Activated CD4-positive, alpha-beta T cell treated with anti-CD3 and anti-CD28 coated beads for 36 hours (primary cell): ENCODE measurements at regions of chr19 and their contacts with region 1.

Region 1: DNA sequence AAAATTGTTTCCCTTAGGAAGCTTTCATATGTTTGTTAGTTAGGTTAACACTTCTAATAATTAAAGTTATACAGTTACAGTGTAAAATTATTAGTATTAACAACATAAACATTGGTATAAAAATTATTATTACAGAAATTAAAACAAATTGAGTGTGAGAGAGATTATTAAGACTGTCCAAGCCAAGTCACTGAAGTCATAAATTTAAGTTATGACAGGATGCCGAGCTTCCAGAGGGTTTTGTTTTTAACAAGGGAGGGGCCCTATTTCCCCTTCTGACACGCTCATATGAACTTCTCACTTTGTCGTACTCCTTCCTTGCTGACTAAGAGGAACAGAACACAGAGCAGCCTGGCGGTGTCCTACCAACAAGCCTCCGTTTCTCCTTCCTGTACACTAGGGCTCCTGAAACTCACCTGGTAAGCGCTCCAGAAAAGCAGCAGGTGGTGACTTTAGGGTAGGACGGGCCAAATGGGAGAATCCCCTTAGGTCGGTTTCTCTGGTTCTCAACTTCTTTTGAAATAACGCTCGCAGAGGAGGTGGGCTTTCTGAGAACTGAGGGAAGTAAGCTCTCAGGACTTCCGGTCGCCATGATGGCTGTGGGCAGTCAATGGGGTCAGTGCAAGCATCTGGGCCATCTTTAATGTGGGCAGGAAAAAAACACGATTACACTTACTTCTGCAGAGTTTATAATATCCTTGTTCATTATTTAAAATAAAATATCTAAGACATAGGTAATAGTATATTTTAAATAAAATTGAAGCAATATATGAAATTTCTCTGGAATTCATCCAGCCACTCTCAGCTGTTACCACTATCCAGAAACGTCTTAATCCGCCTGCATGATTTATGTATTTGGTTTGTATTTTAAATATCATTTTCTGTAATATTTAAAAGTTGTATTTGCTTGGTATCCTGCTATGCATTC is at the start of gene CARD8:
- DNase-seq: peak; percentile 89
- ATAC-seq: peak; percentile 89
- H3K4me3 Mint-ChIP-seq: peak within 1 kb of the TSS; percentile 92
- H3K27ac Mint-ChIP-seq: peak within 1 kb of the TSS; percentile 98
- H3K4me1 Mint-ChIP-seq: peaks cover 63% of the 10 kb centered on the region
- H3K27me3 Mint-ChIP-seq: no peaks in the 10 kb centered on the region
- total RNA-seq, gene CARD8: 109 to 118 TPM

Region 2: GRCh38 chr19:48059331-48059730 is 196.3 kb before region 1 on chr19:
- CTCF ChIA-PET with region 1: no interaction called
- POLR2A ChIA-PET with region 1: interaction called, 11 read pairs
- intact Hi-C with region 1: no loop called
- DNase-seq: peak; percentile 38
- ATAC-seq: no peak
- H3K4me3 Mint-ChIP-seq: no peak overlapping the region
- H3K27ac Mint-ChIP-seq: no peak overlapping the region
- H3K4me1 Mint-ChIP-seq: no peaks in the 10 kb centered on the region
- H3K27me3 Mint-ChIP-seq: no peaks in the 10 kb centered on the region

Region 3: DNA sequence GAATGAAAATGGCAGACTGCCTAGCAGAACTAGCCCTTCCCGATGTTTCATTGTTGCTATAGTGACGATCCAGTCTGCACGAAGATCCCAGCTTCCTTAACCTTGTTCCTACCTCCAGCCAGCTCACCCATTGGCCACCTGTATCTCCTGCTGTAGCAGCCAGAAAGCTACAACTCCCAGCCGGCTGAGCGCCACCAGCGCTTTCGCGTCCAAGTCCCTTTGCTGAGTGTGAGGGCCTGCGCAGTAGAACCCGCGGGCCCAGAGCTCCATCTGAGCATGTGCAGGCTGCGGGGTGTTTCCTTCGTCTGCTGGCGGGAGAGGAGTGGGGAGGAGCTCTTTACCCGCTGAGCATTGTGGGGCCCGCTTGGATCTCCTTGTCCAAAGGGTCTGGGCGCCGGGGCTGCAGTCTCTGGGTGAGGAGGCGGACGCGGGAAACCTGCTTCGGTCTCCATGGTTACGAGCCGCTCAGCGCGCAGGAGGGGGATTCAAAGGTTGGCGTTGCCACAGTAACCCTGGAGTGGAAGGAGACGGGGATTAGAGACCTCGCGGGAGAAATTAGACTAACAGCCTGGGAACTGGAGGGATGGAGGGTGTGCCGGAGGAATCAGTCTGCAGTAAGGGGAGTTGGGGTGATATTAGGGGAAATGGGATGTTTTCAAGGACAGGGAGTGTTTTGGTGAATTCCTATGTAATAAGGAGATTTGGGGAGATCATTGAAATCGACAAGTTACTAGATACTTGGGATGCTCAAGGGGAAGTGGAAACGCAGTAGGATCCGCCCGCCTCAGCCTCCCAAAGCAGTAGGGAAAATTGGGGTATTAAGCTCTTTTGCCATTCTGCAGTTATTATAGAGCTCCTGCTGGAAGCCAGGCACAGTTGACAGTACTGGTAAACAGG is 51.7 kb before region 1 on chr19:
- CTCF ChIA-PET with region 1: interaction called, 33 read pairs
- POLR2A ChIA-PET with region 1: interaction called, 10 read pairs
- intact Hi-C with region 1: loop called (anchors 1 kb)
- DNase-seq: peak; percentile 97
- ATAC-seq: peak; percentile 100
- H3K4me3 Mint-ChIP-seq: no peak overlapping the region
- H3K27ac Mint-ChIP-seq: no peak overlapping the region
- H3K4me1 Mint-ChIP-seq: peaks cover 16% of the 10 kb centered on the region
- H3K27me3 Mint-ChIP-seq: no peaks in the 10 kb centered on the region

Region 4: DNA sequence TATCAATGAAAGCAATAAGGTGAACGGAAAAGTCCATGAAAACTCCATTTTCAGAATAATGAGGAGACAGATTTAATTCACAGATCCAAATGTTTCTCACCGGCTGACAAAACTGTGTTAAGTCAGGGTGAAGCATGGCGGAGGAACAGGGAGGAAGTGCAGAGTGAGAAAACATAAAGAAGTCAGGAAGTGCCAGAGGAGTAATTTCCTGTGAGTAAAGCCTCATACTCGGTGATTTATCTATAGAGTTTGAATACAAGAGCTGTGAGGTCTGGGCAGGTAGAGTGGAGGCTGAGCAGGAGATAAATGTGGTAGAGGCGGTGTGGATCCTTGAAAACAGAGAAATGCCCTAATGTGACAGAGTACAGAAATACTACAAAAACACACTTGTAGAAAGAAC is 11.4 kb before region 1 on chr19:
- CTCF ChIA-PET with region 1: interaction called, 12 read pairs
- POLR2A ChIA-PET with region 1: interaction called, 6 read pairs
- intact Hi-C with region 1: loop called (anchors 1 kb)
- DNase-seq: peak; percentile 59
- ATAC-seq: peak; percentile 87
- H3K4me3 Mint-ChIP-seq: peak overlapping the region; percentile 67
- H3K27ac Mint-ChIP-seq: peak overlapping the region; percentile 89
- H3K4me1 Mint-ChIP-seq: peaks cover 63% of the 10 kb centered on the region
- H3K27me3 Mint-ChIP-seq: no peaks in the 10 kb centered on the region

Region 5: DNA sequence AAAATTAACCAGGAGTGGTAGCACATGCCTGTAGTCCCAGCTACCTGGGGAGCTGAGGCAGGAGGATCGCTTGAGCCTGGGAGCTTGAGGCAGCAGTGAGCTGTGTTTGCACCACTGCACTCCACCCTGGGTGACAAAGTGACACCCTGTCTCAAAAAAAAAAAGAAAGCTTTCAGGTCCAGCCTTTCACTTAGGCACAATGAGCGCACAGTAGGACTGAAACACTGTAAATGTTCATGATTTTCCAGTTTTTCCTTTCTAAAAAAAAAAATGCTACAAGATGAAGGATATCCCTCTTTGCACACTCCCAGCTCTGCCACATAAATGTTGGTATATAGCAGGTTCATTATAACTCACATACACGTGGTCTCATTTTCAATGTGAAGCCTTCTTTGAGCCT is 32.1 kb after region 1 on chr19:
- CTCF ChIA-PET with region 1: no interaction called
- POLR2A ChIA-PET with region 1: no interaction called
- intact Hi-C with region 1: no loop called
- DNase-seq: no peak
- ATAC-seq: no peak
- H3K4me3 Mint-ChIP-seq: no peak overlapping the region
- H3K27ac Mint-ChIP-seq: no peak overlapping the region
- H3K4me1 Mint-ChIP-seq: peaks cover 3% of the 10 kb centered on the region
- H3K27me3 Mint-ChIP-seq: peaks cover 9% of the 10 kb centered on the region